ENCODE measurements at regions of chr6 and their contacts with region 1.

Region 1: GRCh38 chr6:87731818-87732661 is 30.0 kb upstream of the AKIRIN2 start:
- DNase-seq: peak; percentile 91
- ATAC-seq: peak; percentile 79
- H3K4me3 ChIP-seq: peak overlapping the region; percentile 38; the same call in 1 of the 2 replicates
- H3K27ac ChIP-seq: peak overlapping the region; percentile 93
- H3K4me1 ChIP-seq: peaks cover 54% of the 10 kb centered on the region
- H3K27me3 ChIP-seq: no peaks in the 10 kb centered on the region
- CTCF ChIP-seq: no peak

Region 2: DNA sequence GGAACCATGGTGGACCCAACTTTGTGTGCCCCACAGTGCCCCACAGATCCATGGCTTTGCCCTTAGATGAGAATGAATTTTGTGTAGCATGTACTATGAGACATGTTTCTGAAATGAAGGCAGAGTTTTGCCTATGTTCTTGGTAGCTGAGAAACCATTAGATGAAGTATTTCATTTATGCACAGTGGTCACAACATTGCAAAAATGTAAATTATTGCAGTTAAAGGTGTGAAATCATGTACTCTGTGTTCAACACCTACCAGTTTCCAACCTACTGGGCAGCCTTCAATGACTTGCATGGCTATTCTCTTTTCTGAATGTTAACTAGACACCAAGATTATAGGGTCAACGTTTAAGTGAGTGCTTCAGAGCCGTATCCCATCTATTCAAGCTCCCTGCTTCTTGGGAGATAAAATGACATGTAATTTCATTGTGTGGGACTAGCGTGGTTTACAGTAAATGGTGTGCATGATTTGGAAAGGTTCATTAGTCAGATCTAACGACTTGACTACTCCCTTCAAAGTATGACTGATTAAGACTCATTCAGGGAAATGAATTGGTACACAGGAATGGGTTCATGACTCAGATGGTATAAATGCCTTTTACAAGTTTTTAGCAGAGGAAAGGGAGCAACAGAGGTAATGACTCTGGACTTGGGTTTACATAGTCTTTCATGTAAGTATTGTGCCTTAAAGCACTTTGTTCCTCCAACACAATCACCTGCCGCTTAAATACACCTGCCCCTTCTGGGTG is 76.1 kb after region 1 on chr6:
- CTCF ChIA-PET with region 1: interaction called, 4 read pairs
- POLR2A ChIA-PET with region 1: no interaction called
- intact Hi-C with region 1: loop called (anchors 5 kb)
- DNase-seq: peak; percentile 91
- ATAC-seq: peak; percentile 89
- H3K4me3 ChIP-seq: no peak overlapping the region
- H3K27ac ChIP-seq: peak overlapping the region; percentile 69
- H3K4me1 ChIP-seq: peaks cover 25% of the 10 kb centered on the region
- H3K27me3 ChIP-seq: no peaks in the 10 kb centered on the region
- CTCF ChIP-seq: no peak